Sigmoid colon (tissue), 7 donors: ENCODE measurements at regions of chr17 and their contacts with region 1.

Region 1: DNA sequence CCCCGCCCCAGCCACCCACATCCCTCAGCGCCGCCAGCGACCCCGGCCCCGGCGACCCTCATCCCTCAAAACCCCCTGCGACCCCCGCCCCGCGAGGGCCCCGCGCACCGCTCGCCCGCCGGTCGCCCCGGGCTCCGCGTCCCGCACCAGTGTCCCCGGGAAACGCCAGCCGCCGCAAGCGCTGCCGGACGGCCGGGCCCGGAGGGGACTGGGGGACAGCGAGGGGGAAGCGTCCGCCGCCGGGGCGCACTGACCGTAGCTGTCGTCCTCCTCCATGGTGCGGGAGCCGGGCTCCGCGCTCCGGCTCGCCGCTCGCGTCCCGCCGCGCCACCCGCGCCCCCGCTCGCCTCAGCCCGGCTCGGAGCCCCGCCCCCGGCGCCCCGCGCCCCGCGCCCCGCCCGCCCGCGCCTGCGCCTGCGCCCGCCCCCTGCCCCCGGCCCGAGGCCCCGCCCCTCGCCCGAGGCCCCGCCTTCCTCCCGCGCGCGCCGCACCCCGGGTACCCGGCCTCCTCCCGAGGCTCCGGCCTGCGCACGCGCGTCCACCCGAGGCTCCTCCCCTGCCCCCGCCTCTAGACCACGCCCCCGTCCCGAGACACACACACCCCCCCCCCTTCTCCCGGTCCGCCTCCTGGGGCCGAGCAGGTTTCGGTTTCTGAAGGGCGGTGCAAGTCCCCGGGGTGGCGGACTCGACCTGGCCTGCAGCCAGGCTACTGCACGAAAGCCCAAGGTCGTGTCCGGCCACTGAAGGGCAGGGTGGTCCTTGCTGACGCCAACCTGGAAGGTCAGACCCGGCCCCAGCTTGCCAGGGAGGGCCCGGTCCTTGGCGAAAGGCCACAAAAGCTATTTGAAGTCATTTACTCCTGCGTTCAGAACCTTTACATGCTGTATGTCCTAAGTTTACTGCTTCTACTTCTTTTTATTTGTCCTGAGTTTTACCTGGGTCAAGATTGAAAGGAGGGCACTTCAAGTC is at the start of gene CYTH1:
- DNase-seq: peak; percentile 98
- H3K4me3 ChIP-seq: peak within 1 kb of the TSS; percentile 75 to 100 (median 89)
- H3K27ac ChIP-seq: peak within 1 kb of the TSS; percentile 92 to 96 (median 94)
- H3K4me1 ChIP-seq: peaks cover 0 to 19% (median 15%) of the 10 kb centered on the region in 4 donors
- H3K27me3 ChIP-seq: no peaks in the 10 kb centered on the region
- CTCF ChIP-seq: no peak
- EP300 ChIP-seq: no peak
- POLR2A ChIP-seq: peak in 1 of 2 donors; percentile 58
- total RNA-seq, gene CYTH1: 26.7 to 38.5 (median 35.2) TPM

Region 2: DNA sequence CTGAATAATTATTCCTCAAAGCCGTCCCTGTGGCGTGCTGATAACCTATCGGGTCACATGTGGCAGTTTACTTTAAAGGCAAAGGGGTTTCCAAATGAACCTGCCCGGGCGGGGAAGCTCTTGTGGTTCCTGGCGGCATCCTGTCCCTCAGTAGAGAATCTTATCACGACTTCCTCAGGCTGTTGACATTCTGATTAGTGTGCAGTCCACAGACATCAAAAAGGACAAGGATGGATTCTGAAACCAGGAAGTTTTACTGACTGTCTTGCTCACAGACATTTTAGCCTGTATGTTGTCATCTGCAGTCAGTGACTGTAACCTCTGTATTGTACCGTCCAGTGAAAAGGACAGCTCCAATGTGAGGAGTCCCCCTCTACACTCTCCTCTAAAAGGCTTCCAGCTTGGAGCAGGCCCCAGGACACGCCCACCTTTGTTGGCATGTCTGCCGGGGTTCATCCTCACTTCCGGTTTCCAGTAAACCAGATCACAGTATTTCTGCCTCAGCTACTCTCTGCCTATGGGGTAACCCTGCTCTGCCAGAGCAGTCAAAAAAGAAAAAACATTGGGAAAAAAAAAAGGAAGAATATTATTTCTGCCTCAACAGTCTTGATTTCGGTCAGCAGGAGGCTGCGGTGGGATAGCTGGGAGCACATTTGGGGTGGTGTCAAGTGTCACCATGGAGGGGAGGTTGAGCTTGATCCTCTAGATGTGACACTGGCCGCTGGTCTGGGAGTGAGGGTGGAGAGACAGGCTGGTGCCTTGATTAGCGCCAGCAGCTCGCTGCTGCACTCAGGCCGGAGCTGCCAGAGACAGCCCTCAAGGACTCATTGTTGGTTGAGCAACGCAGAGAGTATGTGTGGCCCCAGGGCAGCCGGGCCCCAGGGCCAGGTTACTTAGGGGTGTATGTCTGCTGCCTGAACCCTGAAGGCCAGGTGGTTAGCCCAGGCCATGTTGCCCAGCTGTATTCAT is 116.0 kb before region 1 on chr17:
- intact Hi-C with region 1: no loop called
- DNase-seq: no peak
- H3K4me3 ChIP-seq: no peak overlapping the region
- H3K27ac ChIP-seq: peak overlapping the region in 3 of 4 donors; percentile 11 to 41 (median 38)
- H3K4me1 ChIP-seq: peaks cover 0 to 8% (median 0%) of the 10 kb centered on the region in 4 donors
- H3K27me3 ChIP-seq: no peaks in the 10 kb centered on the region
- CTCF ChIP-seq: no peak
- EP300 ChIP-seq: no peak
- POLR2A ChIP-seq: no peak

Region 3: GRCh38 chr17:78677303-78678221 is 104.7 kb before region 1 on chr17:
- intact Hi-C with region 1: no loop called
- DNase-seq: no peak
- H3K4me3 ChIP-seq: no peak overlapping the region
- H3K27ac ChIP-seq: no peak overlapping the region
- H3K4me1 ChIP-seq: peaks cover 0 to 14% (median 11%) of the 10 kb centered on the region in 4 donors
- H3K27me3 ChIP-seq: no peaks in the 10 kb centered on the region
- CTCF ChIP-seq: no peak
- EP300 ChIP-seq: no peak
- POLR2A ChIP-seq: no peak

Region 4: GRCh38 chr17:78716814-78717393 is 65.3 kb before region 1 on chr17:
- intact Hi-C with region 1: loop called (anchors 5 kb)
- DNase-seq: peak; percentile 91
- H3K4me3 ChIP-seq: peak overlapping the region; percentile 42 to 61 (median 53)
- H3K27ac ChIP-seq: peak overlapping the region; percentile 65 to 82 (median 74)
- H3K4me1 ChIP-seq: peaks cover 0 to 83% (median 58%) of the 10 kb centered on the region in 4 donors
- H3K27me3 ChIP-seq: no peaks in the 10 kb centered on the region
- CTCF ChIP-seq: peak in 1 of 4 experiments; percentile 22
- EP300 ChIP-seq: peak in 1 of 4 donors; percentile 22
- POLR2A ChIP-seq: no peak

Region 5: GRCh38 chr17:78840725-78841611 is 58.7 kb after region 1 on chr17 and contains the start of gene USP36:
- intact Hi-C with region 1: loop called (anchors 1 kb)
- DNase-seq: peak; percentile 100
- H3K4me3 ChIP-seq: peak within 1 kb of the TSS; percentile 74 to 95 (median 90)
- H3K27ac ChIP-seq: peak within 1 kb of the TSS; percentile 92 to 100 (median 98)
- H3K4me1 ChIP-seq: peaks cover 0 to 28% (median 22%) of the 10 kb centered on the region in 4 donors
- H3K27me3 ChIP-seq: no peaks in the 10 kb centered on the region
- CTCF ChIP-seq: no peak
- EP300 ChIP-seq: peak; percentile 65 to 99 (median 97)
- POLR2A ChIP-seq: peak; percentile 78 to 95
- total RNA-seq, gene USP36: 18.5 to 49.3 (median 35.9) TPM

Region 6: DNA sequence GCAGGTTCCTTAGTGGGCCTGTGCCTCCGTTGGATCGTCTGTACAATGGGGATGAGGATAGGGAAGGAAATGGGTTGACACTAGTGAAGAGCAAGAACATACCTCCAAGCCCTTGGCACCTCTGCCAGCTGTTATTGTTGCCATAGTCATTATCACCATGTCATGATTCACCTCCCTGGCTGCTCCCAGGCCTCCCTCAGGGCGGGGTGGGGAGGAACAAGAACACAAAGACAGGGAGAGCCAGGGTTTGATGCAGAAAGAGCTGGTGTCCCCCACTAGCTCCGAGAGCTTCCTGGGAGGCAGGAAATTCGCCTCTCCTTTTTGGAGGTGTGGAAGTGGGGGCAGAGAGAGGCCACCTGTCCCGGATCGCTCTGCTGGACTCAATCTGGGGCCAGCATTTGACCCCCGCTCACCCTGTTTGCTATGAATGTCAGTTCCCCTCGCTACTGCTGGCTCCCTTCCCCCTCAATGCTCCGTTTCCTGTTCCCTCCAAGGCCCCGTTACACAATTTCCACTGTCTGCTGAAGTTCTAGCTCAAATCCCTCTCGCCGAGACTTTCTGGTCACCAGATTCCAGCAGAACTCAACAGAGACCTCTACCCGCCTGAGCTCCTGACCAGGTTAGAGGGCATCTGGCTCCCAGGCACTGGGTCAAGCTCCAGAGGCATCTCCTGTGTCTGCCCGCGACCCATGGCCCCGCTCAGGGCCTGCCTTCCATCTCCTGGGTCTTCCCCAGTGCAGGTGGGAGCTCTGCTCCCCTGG is 133.8 kb after region 1 on chr17:
- intact Hi-C with region 1: no loop called
- DNase-seq: peak; percentile 86
- H3K4me3 ChIP-seq: peak overlapping the region in 1 of 4 donors; percentile 25
- H3K27ac ChIP-seq: peak overlapping the region; percentile 77 to 100 (median 88)
- H3K4me1 ChIP-seq: peaks cover 0 to 97% (median 90%) of the 10 kb centered on the region in 4 donors
- H3K27me3 ChIP-seq: no peaks in the 10 kb centered on the region
- CTCF ChIP-seq: no peak
- EP300 ChIP-seq: no peak
- POLR2A ChIP-seq: no peak